ENCODE measurements at regions of chr15 and their contacts with region 1.

Region 1: DNA sequence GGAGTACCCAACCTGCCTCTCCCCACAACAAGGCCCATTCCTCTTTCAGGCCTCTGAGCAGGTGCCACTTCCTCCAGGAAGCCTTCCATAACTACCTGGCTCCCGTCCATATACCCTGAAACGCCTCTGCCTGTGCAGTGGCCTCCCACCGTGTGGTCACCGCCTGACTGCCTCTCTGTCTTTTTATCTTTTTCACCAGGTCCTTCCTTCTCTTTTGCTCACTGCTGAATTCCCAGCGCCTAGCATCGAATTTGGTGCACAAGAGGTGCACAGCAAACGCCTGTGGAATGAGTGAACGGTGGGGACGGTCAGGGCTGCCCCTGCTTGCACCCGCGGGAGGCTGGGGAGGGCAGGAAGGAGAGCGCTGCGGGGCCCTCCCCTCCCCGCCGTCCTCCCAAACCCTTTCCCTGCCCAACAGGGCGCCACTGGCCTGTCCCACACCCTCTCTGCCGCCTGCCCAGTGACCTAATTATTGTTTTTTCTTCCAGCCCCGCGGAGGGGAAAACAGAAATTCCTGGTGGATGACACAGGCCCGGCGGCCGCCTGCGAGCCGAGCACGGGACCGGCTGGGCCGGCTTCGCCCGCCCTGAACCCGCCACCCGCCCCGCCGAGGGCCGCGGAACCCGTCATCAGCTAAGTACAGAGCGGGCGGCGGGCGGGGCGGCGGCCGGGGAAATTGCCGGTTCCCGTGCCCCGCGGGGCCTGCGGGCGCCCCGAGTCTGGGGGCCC is 140.1 kb downstream of the SMAD6 start:
- DNase-seq: peak; percentile 89
- ATAC-seq: peak; percentile 94
- H3K4me3 ChIP-seq: peak overlapping the region; percentile 28
- H3K27ac ChIP-seq: peak overlapping the region; percentile 98
- H3K4me1 ChIP-seq: peaks cover 29% of the 10 kb centered on the region
- H3K27me3 ChIP-seq: no peaks in the 10 kb centered on the region
- CTCF ChIP-seq: 0 out of 2 replicates have a peak, but pooled peaks have one; percentile 1
- POLR2A ChIP-seq: peak; percentile 61
- RAD21 ChIP-seq: no peak; the same call in 1 of the 2 replicates

Region 2: GRCh38 chr15:66803182-66803729 is 38.9 kb before region 1 on chr15:
- CTCF ChIA-PET with region 1: no interaction called
- POLR2A ChIA-PET with region 1: interaction called, 3 read pairs
- dilution Hi-C with region 1: no loop called
- in situ Hi-C with region 1: no loop called
- intact Hi-C with region 1: loop called (anchors 5 kb)
- DNase-seq: peak; percentile 98
- ATAC-seq: peak; percentile 94
- H3K4me3 ChIP-seq: no peak overlapping the region
- H3K27ac ChIP-seq: peak overlapping the region; percentile 99
- H3K4me1 ChIP-seq: peaks cover 33% of the 10 kb centered on the region
- H3K27me3 ChIP-seq: no peaks in the 10 kb centered on the region
- CTCF ChIP-seq: no peak
- POLR2A ChIP-seq: no peak
- RAD21 ChIP-seq: peak; percentile 40

Region 3: DNA sequence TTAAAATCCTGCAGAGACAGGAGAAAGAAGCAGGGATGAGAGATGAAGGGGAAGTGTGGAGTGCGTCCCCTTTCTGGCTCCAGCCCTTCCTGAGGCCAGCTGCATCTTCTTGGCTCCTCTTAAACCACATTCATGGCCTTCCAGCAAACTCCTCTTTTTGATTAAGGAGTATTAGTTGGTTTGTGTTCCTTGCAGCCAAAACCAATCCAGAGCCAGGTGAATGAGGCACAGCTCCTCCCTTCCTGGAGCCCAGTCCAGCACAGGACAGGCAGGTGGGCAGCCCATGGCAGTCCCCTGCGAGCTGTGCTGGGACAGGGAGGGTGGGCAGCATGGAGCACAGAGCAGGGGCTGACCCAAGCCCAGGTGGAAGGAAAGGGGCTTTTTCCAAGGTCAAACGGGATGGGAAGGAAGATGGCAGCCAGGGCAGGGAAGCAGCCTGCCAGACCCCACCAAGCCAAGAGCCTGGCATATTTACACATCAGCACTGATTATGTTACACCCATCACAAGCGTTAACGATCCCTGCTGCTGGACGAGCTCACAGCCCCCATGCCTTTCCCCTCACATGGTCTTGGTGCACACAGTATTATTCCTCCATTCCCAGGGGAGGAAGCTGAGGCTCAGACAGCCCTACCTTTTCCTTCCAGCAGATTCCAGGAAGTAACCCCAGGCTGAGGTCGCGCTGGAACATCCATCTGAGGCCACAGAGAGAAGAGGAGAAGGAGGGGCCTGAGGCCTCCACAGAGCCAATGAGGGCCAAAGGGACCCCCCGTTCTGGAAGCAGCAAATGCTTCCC is 35.6 kb after region 1 on chr15:
- CTCF ChIA-PET with region 1: no interaction called
- POLR2A ChIA-PET with region 1: no interaction called
- dilution Hi-C with region 1: no loop called
- in situ Hi-C with region 1: no loop called
- intact Hi-C with region 1: no loop called
- DNase-seq: no peak
- ATAC-seq: no peak
- H3K4me3 ChIP-seq: no peak overlapping the region
- H3K27ac ChIP-seq: no peak overlapping the region
- H3K4me1 ChIP-seq: peaks cover 10% of the 10 kb centered on the region
- H3K27me3 ChIP-seq: peaks cover 3% of the 10 kb centered on the region
- CTCF ChIP-seq: no peak
- POLR2A ChIP-seq: no peak
- RAD21 ChIP-seq: no peak

Measured in IMR-90 (cell line).